ENCODE measurements at regions of chr7 and their contacts with region 1.

Region 1: GRCh38 chr7:87416682-87417587 is 58.5 kb downstream of the ABCB4 start:
- DNase-seq: peak in 1 of 2 donors; percentile 77
- ATAC-seq: peak; percentile 75

Region 2: GRCh38 chr7:87312215-87312865 is 104.6 kb before region 1 on chr7:
- intact Hi-C with region 1: loop called (anchors 2 to 10 kb)
- DNase-seq: peak in 1 of 2 donors; percentile 36
- ATAC-seq: peak; percentile 90

Region 3: DNA sequence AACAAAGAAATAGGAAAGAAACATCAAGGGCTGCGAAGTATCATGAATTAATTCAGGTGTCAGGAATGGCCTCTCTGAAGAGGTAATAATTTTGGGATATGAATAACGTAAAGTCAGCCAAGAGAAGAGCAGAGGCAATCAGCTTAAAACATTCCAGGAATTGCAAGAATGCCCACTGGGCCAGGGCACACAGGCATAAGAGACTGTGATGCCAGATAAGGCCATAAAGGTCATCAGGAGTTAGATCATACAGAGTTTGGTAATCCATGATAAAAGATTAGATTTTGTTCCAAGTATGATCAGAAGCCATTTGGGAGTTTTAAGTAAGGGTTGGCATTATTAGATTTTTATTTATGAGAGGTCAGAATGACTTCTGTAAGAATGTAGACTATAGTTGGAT is 111.8 kb after region 1 on chr7:
- intact Hi-C with region 1: no loop called
- DNase-seq: no peak
- ATAC-seq: no peak

Measured in left colon (tissue), 2 donors.